CD8-positive, alpha-beta memory T cell (primary cell): ENCODE measurements at regions of chr13 and their contacts with region 1.

Region 1: GRCh38 chr13:32315238-32316027 is at the starts of genes BRCA2 and ZAR1L:
- DNase-seq: peak; percentile 84 to 92 (median 85)
- H3K4me3 ChIP-seq: peak within 1 kb of the TSS; percentile 96
- H3K4me3 Mint-ChIP-seq: peak within 1 kb of the TSS; percentile 89 to 100 (median 97)
- H3K27ac ChIP-seq: peak within 1 kb of the TSS; percentile 100
- H3K27ac Mint-ChIP-seq: peak within 1 kb of the TSS; percentile 98 to 100 (median 100)
- H3K4me1 ChIP-seq: peaks cover 13% of the 10 kb centered on the region
- H3K4me1 Mint-ChIP-seq: peaks cover 13 to 23% (median 21%) of the 10 kb centered on the region in 3 donors
- H3K27me3 ChIP-seq: no peaks in the 10 kb centered on the region
- H3K27me3 Mint-ChIP-seq: peaks cover 0 to 3% of the 10 kb centered on the region in 2 donors
- total RNA-seq, gene BRCA2: 12.6 to 14.2 TPM
- total RNA-seq, gene ZAR1L: not detected

Region 2: DNA sequence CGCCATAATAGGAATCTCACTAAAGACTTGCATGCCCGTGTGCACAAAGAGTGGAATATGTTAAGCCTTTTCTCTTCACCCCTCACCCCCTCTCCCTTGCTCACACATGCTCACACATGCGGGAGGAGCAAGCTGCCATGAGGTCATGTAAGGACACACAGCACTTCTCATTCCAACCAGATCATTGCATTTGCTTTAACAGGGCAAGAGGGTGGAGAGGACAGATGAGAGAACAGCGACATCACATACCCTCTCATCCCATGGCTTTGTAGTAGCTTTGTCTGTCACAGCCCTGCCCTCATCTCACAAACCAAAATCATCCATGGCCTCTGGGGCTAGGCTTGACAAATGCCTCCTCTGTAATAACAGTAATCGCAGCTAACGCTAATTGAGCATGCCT is 429.4 kb before region 1 on chr13:
- CTCF ChIA-PET with region 1: no interaction called
- POLR2A ChIA-PET with region 1: no interaction called
- DNase-seq: no peak
- H3K4me3 ChIP-seq: no peak overlapping the region
- H3K4me3 Mint-ChIP-seq: no peak overlapping the region
- H3K27ac ChIP-seq: no peak overlapping the region
- H3K27ac Mint-ChIP-seq: peak overlapping the region in 1 of 8 donors; percentile 39
- H3K4me1 ChIP-seq: no peaks in the 10 kb centered on the region
- H3K4me1 Mint-ChIP-seq: no peaks in the 10 kb centered on the region
- H3K27me3 ChIP-seq: no peaks in the 10 kb centered on the region
- H3K27me3 Mint-ChIP-seq: peaks cover 0 to 1% of the 10 kb centered on the region in 2 donors

Region 3: DNA sequence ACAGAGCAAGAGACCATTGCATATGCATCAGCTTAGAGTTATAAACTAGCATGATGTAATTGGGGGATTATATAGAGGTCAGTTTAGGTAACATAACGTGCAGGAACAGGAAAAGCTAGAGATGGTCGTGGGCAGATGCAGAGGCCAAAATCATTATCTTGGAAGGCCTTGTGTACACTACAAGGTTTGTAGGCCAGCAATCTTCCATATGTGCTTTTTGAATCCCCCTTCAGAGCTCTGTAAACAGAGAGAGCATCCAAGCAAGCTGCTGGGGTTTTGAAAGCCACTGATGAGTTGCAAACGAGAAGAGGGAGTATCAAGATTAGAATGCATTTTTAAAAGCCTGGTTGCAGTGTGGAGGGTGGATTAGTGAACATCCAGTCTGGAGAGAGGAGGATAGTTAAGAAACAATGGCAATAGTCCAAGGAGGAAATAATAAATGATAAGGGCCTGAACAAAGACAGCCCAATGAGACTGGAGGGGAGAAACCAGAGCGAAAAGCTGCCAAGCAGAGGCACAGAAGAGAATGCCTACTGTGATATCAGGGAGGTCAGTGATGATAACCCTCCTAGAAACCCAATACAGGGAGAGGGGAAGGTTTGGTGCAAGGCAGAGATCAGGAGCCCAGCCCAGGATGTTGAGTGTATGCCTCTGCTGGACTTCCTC is 109.9 kb before region 1 on chr13:
- CTCF ChIA-PET with region 1: no interaction called
- POLR2A ChIA-PET with region 1: no interaction called
- DNase-seq: no peak
- H3K4me3 ChIP-seq: no peak overlapping the region
- H3K4me3 Mint-ChIP-seq: no peak overlapping the region
- H3K27ac ChIP-seq: no peak overlapping the region
- H3K27ac Mint-ChIP-seq: no peak overlapping the region
- H3K4me1 ChIP-seq: no peaks in the 10 kb centered on the region
- H3K4me1 Mint-ChIP-seq: no peaks in the 10 kb centered on the region
- H3K27me3 ChIP-seq: no peaks in the 10 kb centered on the region
- H3K27me3 Mint-ChIP-seq: peaks cover 0 to 4% of the 10 kb centered on the region in 2 donors

Region 4: DNA sequence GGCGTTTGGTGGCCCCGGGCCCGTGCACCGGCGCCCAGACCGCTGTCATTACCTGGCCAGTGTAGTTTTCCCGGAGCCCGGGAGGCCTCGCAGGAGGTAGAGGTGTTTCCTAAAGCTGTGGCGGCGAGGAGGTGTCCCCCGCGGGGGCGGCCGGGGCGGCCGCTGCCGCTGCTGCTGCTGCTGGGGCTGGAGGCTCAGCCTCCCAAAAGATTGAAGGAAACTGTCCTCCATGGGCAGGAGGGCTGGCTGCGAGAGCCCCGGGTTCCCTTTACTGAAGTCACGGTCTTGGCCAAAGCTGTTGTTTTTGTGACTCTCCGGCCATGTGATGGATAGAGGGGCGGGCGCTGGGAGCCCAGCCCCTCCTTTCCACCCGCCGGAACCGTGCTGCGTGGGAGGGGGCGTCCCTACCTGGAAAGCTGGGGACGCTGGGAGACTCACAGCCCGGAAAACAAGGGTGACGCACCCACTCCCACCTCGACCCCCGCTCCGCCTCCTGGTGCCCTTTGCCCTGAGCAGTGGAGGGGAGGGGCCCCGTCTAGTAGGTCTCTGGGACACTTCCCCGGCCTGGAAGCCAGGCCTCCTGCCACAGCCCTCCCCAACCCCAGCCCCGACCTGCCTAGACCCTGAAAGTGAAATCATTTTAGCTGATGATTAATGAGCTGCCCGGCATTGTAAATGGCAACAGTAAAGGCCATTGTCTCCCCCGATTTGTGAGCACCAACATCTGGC is 112.6 kb after region 1 on chr13 and contains the start of gene N4BP2L1:
- CTCF ChIA-PET with region 1: interaction called, 4 read pairs
- POLR2A ChIA-PET with region 1: interaction called, 41 read pairs
- DNase-seq: peak; percentile 82 to 92 (median 85)
- H3K4me3 ChIP-seq: peak within 1 kb of the TSS; percentile 84
- H3K4me3 Mint-ChIP-seq: peak within 1 kb of the TSS; percentile 92 to 100 (median 94)
- H3K27ac ChIP-seq: peak within 1 kb of the TSS; percentile 87
- H3K27ac Mint-ChIP-seq: peak within 1 kb of the TSS; percentile 95 to 100 (median 98)
- H3K4me1 ChIP-seq: peaks cover 36% of the 10 kb centered on the region
- H3K4me1 Mint-ChIP-seq: peaks cover 40 to 53% (median 47%) of the 10 kb centered on the region in 3 donors
- H3K27me3 ChIP-seq: no peaks in the 10 kb centered on the region
- H3K27me3 Mint-ChIP-seq: no peaks in the 10 kb centered on the region
- total RNA-seq, gene N4BP2L1: 15.1 to 16.8 TPM

Region 5: DNA sequence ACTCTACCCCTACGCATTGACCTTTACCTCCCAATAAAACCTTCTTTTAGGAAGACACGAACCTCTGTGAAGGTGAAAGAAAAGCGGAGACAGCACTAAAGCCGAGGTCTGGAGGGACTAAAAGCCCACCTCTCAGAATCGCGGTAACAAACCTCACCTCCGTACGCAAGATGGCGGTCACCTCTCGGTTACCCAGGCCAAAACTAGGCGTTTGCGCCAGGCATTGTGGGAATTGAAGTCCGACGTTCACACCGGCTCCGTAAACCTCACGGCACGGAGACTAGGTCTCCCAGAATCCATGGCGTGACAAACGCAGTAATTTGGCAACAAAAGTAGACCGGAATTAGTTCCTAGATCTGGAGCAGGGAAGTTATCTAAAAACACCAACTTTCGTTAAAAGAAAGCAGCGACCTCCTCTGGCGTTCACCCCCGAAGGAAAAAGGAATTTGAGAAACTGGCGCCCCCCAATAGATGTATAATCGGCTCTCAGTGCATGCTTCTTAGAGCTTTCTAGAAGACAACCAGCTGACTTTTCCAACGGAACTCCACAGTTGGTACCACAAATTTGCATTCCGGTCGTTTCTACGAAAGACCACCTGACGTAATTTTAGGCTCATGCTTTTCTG is 223.3 kb after region 1 on chr13 and contains the start of gene N4BP2L2:
- CTCF ChIA-PET with region 1: interaction called, 3 read pairs
- POLR2A ChIA-PET with region 1: interaction called, 15 read pairs
- DNase-seq: peak; percentile 82 to 94 (median 89)
- H3K4me3 ChIP-seq: peak within 1 kb of the TSS; percentile 99
- H3K4me3 Mint-ChIP-seq: peak within 1 kb of the TSS; percentile 97 to 100 (median 99)
- H3K27ac ChIP-seq: peak within 1 kb of the TSS; percentile 96
- H3K27ac Mint-ChIP-seq: peak within 1 kb of the TSS; percentile 99 to 100 (median 100)
- H3K4me1 ChIP-seq: peaks cover 43% of the 10 kb centered on the region
- H3K4me1 Mint-ChIP-seq: peaks cover 46 to 52% (median 51%) of the 10 kb centered on the region in 3 donors
- H3K27me3 ChIP-seq: no peaks in the 10 kb centered on the region
- H3K27me3 Mint-ChIP-seq: peaks cover 0 to 3% of the 10 kb centered on the region in 2 donors
- total RNA-seq, gene N4BP2L2: 77.7 to 78.3 TPM

Region 6: DNA sequence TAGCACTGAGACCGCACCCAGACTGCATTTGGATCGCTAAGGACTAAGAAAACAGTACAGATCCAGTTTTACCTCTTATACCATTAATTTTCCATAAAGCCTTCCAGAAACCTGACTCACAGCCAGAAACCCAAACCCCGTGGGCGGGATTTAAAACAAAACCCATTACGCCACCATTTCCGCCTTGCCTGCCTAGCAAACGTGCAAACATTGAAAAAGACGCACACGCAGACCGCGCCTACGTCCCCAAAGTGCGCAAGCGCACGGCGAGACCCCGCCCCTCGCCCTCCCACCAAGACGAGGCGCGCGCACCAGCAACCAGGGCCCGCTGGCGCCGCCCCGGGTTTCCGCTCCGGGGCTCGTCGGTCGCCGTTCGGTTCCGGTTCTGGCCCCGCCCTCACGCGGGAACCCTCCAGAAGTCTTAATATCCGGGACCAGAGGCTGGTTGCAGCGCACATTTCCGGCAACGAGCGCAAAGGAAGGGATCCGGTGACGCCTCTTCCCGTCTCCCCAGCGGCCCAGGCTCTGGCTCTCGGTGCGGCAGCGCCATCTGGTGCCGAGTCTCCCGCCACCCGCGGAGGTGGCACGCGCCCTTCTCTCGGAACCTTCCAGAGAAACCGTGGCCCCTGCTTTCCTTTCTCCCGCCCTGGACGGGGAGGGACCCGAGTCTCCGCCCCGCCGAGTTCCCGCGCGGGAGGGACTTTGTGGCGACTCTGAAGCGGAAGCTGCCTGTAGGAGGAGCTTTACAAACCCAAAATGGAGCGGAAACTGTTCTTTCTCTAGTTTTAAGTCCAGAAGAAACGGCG is 1227.1 kb after region 1 on chr13:
- CTCF ChIA-PET with region 1: no interaction called
- POLR2A ChIA-PET with region 1: interaction called, 10 read pairs
- DNase-seq: peak; percentile 98 to 100 (median 99)
- H3K4me3 ChIP-seq: peak overlapping the region; percentile 91
- H3K4me3 Mint-ChIP-seq: peak overlapping the region; percentile 92 to 98 (median 94)
- H3K27ac ChIP-seq: peak overlapping the region; percentile 99
- H3K27ac Mint-ChIP-seq: peak overlapping the region; percentile 98 to 100 (median 100)
- H3K4me1 ChIP-seq: peaks cover 38% of the 10 kb centered on the region
- H3K4me1 Mint-ChIP-seq: peaks cover 45 to 56% (median 48%) of the 10 kb centered on the region in 3 donors
- H3K27me3 ChIP-seq: no peaks in the 10 kb centered on the region
- H3K27me3 Mint-ChIP-seq: peaks cover 0 to 2% of the 10 kb centered on the region in 2 donors